ENCODE measurements at regions of chr15 and their contacts with region 1.

Region 1: GRCh38 chr15:101288908-101289513 is 6.0 kb downstream of the SNRPA1 start:
- DNase-seq: peak; percentile 73
- H3K4me3 ChIP-seq: no peak overlapping the region
- H3K27ac ChIP-seq: no peak overlapping the region
- H3K4me1 ChIP-seq: peaks cover 10% of the 10 kb centered on the region
- H3K27me3 ChIP-seq: no peaks in the 10 kb centered on the region
- CTCF ChIP-seq: peak; percentile 73

Region 2: DNA sequence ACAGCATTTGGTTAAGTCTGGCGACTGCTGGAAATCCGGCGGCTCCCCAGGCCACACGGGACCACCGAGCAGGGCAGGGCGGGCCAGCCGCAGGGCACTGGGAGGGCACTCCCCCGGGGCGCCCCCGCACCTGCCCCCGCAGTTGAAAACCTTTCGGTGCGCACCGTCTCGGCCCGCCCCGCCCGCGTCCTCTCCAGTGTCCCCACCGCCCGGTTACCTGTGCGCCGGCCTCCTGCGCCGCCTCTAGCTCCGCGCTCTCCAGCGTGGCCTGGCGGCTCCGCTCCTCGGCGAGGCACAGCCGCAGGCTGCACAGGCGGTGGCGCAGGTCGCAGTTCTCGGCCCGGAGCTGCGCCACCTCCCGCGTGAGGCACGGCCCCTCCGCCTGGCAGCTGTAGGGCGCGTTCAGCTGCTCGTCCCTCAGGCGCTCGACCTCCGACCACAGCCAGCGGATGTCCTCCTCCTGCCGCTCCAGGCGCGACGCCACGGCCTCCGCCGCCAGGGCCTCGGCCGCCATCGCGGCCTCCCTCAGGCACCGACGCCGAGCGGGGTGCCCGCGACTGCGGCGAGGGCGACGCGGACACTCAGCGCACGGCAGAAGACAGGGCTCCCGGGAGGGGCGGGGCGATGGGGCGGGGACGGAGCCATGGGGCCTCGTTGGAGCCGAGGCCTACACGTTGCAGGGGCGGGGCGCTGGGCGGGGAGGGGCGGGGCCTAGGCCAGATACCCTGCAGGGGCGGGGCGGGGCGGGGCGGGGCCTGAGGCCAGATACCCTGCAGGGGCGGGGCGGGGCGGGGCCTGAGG is 435.1 kb after region 1 on chr15 and contains the start of gene TARS3:
- CTCF ChIA-PET with region 1: interaction called, 17 read pairs
- POLR2A ChIA-PET with region 1: no interaction called
- intact Hi-C with region 1: no loop called
- DNase-seq: peak; percentile 94
- H3K4me3 ChIP-seq: peak within 1 kb of the TSS; percentile 85
- H3K27ac ChIP-seq: peak within 1 kb of the TSS; percentile 83
- H3K4me1 ChIP-seq: peaks cover 3% of the 10 kb centered on the region
- H3K27me3 ChIP-seq: no peaks in the 10 kb centered on the region
- CTCF ChIP-seq: peak; percentile 27
- total RNA-seq, gene TARS3: 8.9 and 9.1 TPM in 2 replicates